A549 (cell line): ENCODE measurements at regions of chr12 and their contacts with region 1.

Region 1: GRCh38 chr12:50043854-50044253 is 13.5 kb upstream of the ASIC1 start:
- DNase-seq: no peak
- ATAC-seq: no peak
- H3K4me3 ChIP-seq: no peak overlapping the region
- H3K27ac ChIP-seq: no peak overlapping the region
- H3K4me1 ChIP-seq: no peaks in the 10 kb centered on the region
- CTCF ChIP-seq: no peak
- EP300 ChIP-seq: no peak
- POLR2A ChIP-seq: no peak
- RAD21 ChIP-seq: no peak

Region 2: GRCh38 chr12:50025187-50026059 is 18.4 kb before region 1 on chr12 and contains the start of gene RACGAP1:
- CTCF ChIA-PET with region 1: interaction called, 50 read pairs
- POLR2A ChIA-PET with region 1: no interaction called
- DNase-seq: peak; percentile 97 to 99
- ATAC-seq: peak; percentile 99
- H3K4me3 ChIP-seq: peak within 1 kb of the TSS; percentile 83
- H3K27ac ChIP-seq: peak within 1 kb of the TSS; percentile 82 to 91
- H3K4me1 ChIP-seq: peaks cover 11% of the 10 kb centered on the region; the same call in 2 of the 3 replicates
- CTCF ChIP-seq: no peak
- EP300 ChIP-seq: no peak
- POLR2A ChIP-seq: no peak; the same call in 1 of the 2 replicates
- RAD21 ChIP-seq: no peak
- polyA plus RNA-seq, gene RACGAP1: 99.2 and 103 TPM in 2 replicates

Region 3: DNA sequence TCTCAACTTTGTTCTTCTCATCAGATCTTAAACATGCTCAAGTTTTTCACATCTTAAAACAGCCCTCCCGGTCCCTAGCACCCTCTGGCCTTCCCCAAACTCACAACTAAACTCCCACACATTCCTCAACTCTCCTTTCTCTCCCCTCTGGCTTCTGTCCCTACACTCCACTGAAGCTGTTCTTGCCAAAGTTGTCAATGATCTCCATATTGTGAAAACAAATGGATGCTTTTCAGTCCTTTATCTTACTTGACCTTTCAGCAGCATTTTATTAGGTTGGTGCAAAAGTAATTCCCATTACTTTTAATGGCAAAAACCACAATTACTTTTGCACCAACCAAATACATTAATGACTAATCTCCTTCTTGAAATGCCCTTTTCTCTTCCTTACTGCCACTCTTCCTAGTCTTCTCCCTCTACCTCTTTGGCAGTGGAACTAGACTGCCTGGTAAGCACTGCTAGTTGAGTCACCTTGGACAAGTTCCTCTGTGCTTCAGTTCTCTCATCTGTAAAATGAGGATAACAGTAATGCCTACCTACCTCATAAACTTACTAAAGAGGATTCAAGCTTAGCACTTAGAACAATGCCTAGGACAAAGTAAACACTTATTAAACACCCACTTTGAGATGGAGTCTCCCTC is 107.3 kb after region 1 on chr12:
- CTCF ChIA-PET with region 1: no interaction called
- POLR2A ChIA-PET with region 1: no interaction called
- DNase-seq: no peak
- ATAC-seq: peak in 1 of 2 experiments; percentile 26; a peak in 2 of 6 replicates
- H3K4me3 ChIP-seq: no peak overlapping the region
- H3K27ac ChIP-seq: no peak overlapping the region
- H3K4me1 ChIP-seq: no peaks in the 10 kb centered on the region
- CTCF ChIP-seq: no peak
- EP300 ChIP-seq: no peak
- POLR2A ChIP-seq: no peak
- RAD21 ChIP-seq: no peak